Spleen (tissue), 13 donors: ENCODE measurements at regions of chr4 and their contacts with region 1.

Region 1: DNA sequence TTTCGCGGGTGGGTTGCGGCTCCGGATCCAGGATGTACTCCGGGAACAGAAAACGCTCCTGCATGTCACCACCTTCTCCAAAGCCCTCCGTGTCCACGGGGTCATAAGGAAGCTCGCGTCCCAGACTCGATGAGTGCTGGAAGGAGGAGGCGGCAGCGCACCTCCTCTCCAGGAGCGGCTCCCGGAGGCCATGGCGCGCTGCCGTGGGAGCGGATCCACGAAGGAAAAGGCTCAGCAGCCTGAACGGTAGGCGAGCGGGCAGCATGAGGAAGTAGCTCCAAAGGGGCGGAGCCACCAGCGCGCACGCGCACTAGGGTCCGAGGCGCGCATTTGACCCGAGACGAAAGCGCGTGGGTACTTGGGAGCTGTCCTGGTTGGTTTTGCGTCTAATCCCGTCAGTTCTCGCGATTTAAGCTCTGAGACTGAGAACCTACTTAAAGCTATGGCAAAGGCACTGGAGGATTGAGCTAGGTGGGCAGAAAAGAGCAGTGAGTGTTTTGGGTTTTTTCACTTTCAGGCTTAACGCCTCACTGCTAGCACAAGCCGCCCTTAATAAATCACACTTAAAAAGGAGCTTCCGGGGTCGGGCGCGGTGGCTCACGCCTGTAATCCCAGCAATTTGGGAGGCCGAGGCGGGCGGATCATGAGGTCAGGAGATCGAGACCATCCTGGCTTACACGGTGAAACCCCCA is at the start of gene NOA1:
- DNase-seq: peak; percentile 99
- H3K4me3 ChIP-seq: peak within 1 kb of the TSS; percentile 85 to 99 (median 98)
- H3K27ac ChIP-seq: peak within 1 kb of the TSS; percentile 75 to 95 (median 94)
- H3K4me1 ChIP-seq: peaks cover 43 to 75% (median 60%) of the 10 kb centered on the region in 6 donors
- H3K27me3 ChIP-seq: no peaks in the 10 kb centered on the region
- CTCF ChIP-seq: peak in 1 of 11 experiments; percentile 5
- POLR2A ChIP-seq: peak in 1 of 3 donors; percentile 48
- total RNA-seq, gene NOA1: 12.2 to 21.4 (median 15.8) TPM

Region 2: DNA sequence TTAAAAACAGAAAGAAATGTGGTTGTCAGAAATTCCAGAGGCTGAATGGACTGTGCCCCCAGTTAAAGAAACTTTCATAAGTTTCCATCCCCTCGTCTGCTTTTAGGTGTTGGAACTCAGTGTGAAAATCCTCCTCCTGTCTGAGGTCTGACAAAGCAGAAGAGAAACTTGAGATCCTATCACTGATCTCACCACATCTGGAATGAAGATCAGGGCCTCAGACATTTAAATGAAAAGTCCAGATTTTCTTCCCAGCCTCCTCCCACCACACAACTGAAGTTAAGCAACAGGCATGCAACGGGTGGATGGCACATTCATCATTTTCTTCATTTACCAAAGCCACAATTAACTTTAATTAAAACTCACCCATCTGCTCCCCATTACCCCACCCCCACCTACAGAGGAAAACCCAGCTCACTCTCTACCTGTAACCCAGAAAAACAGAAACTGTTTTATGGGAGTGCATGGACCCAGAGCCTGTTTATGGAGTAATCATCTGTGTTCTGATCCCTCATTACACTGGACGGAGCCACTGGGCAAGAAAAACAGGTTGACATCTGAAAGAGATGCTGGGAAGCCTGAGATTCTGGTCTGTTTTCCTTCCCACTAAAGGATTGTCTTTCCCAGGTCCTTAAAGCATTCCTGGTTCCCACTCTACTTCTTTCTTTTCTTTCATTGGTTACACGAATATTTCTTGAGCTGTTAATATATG is 238.2 kb before region 1 on chr4:
- intact Hi-C with region 1: no loop called
- DNase-seq: no peak
- H3K4me3 ChIP-seq: no peak overlapping the region
- H3K27ac ChIP-seq: no peak overlapping the region
- H3K4me1 ChIP-seq: no peaks in the 10 kb centered on the region
- H3K27me3 ChIP-seq: no peaks in the 10 kb centered on the region
- CTCF ChIP-seq: no peak
- POLR2A ChIP-seq: no peak

Region 3: DNA sequence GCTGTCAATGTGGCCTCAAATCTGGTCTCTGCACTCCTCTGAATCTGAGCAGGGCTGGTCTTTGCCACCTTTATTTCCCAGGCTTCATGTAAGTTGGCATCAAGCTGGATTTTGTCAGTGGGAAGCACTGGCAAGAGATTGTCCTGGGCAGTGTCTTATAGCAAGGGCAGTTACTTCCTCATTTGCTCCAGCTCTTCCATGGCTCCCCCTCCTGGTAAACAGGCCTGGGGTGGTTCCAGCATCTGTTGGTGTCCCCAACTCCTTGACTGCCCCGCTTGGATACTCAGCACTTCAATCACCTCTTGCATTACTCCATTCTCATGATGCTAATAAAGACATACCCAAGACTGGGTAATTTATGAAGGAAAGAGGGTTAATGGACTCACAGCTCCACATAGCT is 84.8 kb before region 1 on chr4:
- intact Hi-C with region 1: no loop called
- DNase-seq: no peak
- H3K4me3 ChIP-seq: no peak overlapping the region
- H3K27ac ChIP-seq: no peak overlapping the region
- H3K4me1 ChIP-seq: no peaks in the 10 kb centered on the region
- H3K27me3 ChIP-seq: no peaks in the 10 kb centered on the region
- CTCF ChIP-seq: no peak
- POLR2A ChIP-seq: no peak

Region 4: GRCh38 chr4:56907489-56908205 is 69.8 kb before region 1 on chr4 and contains the start of gene REST:
- intact Hi-C with region 1: loop called (anchors 5 kb)
- DNase-seq: peak; percentile 96
- H3K4me3 ChIP-seq: peak within 1 kb of the TSS; percentile 81 to 100 (median 98)
- H3K27ac ChIP-seq: peak within 1 kb of the TSS; percentile 82 to 98 (median 96)
- H3K4me1 ChIP-seq: peaks cover 23 to 52% (median 43%) of the 10 kb centered on the region in 6 donors
- H3K27me3 ChIP-seq: no peaks in the 10 kb centered on the region
- CTCF ChIP-seq: no peak
- POLR2A ChIP-seq: peak in 1 of 3 donors; percentile 52
- total RNA-seq, gene REST: 34.2 to 45.4 (median 40.8) TPM

Region 5: GRCh38 chr4:57195622-57196021 is 218.2 kb after region 1 on chr4:
- intact Hi-C with region 1: no loop called
- DNase-seq: no peak
- H3K4me3 ChIP-seq: no peak overlapping the region
- H3K27ac ChIP-seq: no peak overlapping the region
- H3K4me1 ChIP-seq: no peaks in the 10 kb centered on the region
- H3K27me3 ChIP-seq: peaks cover 0 to 38% (median 0%) of the 10 kb centered on the region in 7 donors
- CTCF ChIP-seq: no peak
- POLR2A ChIP-seq: no peak